H1 (cell line): ENCODE measurements at regions of chr3 and their contacts with region 1.

Region 1: DNA sequence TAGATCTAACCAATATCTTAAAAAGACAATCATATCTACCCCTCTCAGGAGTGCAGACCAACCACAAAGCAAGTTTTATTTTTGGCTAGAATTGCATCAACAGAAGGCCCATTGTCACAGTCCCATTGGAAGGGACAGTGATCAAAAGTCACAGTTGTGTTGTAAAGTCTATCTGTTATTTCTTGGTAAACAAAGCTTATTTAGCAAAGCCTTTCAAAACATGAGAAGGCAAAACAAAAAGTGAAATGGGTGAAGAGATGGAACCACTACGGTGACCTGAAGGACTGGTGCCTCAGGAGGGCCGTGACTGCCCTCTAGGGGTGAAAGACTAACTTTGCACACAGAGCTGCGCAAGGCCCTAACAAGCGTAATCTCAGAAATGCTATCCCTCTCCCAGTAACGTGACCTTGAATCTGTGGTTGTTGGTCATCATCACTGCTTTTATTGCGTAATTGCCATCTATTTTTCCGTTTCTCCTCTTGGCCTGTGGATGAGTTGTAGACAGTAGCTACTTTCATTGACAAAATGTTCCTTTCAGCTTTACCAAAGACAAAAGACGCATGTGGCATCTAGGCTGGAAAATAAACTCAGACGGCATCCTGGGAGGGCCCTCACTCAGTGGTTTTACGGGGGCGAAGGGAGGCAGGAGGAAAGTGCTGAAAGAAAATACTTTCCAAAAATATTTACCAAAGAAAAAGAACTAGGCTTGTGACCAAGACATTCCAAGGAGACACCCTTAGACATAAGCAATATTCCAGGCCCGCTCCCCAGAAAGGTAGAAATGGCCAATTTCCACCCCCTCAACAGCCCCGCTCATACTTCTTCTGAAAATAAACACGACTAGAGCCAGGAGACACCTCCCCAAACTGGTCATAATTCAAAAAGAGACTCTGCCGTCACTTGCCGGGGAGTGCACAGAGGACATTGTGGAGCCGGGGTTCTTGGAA is 79.4 kb downstream of the FRMD4B start:
- DNase-seq: peak in 1 of 2 experiments; percentile 63
- H3K4me3 ChIP-seq: no peak overlapping the region
- H3K27ac ChIP-seq: no peak overlapping the region
- H3K4me1 ChIP-seq: no peaks in the 10 kb centered on the region
- H3K27me3 ChIP-seq: no peaks in the 10 kb centered on the region
- CTCF ChIP-seq: peak; percentile 86 to 98 (median 91)
- EP300 ChIP-seq: no peak
- POLR2A ChIP-seq: no peak
- RAD21 ChIP-seq: peak; percentile 98 to 99

Region 2: DNA sequence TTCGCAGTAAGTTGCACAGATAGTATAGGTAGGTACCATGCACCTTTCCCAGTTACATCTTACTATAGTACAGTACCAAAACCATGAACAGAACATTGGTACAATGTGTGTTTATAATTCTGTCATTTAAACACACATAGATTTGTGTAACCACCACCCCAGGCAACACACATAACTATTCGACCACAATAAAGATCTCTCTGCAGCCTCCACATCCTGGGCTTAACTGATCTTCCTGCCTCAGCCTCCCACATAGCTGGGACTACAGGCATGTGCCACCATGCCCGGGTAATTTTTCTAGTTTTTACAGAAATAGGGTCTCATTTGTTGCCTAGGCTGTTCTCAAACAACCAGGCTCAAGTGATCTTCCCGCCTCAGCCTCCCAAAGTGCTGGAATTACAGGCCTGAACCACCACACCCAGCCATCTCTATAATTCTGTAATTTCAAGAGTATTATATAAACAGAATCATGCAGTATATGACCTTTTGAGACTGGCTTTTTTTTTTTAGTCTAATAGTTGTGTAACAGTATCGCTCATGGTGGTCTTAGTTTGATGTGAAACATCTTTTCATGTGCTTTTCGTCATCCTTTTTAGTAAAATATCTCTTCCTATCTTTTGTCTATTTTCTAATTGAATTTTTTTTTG is 241.1 kb before region 1 on chr3:
- CTCF ChIA-PET with region 1: no interaction called
- POLR2A ChIA-PET with region 1: no interaction called
- DNase-seq: no peak
- H3K4me3 ChIP-seq: no peak overlapping the region
- H3K27ac ChIP-seq: no peak overlapping the region
- H3K4me1 ChIP-seq: no peaks in the 10 kb centered on the region
- H3K27me3 ChIP-seq: no peaks in the 10 kb centered on the region
- CTCF ChIP-seq: no peak
- EP300 ChIP-seq: no peak
- POLR2A ChIP-seq: no peak
- RAD21 ChIP-seq: no peak

Region 3: DNA sequence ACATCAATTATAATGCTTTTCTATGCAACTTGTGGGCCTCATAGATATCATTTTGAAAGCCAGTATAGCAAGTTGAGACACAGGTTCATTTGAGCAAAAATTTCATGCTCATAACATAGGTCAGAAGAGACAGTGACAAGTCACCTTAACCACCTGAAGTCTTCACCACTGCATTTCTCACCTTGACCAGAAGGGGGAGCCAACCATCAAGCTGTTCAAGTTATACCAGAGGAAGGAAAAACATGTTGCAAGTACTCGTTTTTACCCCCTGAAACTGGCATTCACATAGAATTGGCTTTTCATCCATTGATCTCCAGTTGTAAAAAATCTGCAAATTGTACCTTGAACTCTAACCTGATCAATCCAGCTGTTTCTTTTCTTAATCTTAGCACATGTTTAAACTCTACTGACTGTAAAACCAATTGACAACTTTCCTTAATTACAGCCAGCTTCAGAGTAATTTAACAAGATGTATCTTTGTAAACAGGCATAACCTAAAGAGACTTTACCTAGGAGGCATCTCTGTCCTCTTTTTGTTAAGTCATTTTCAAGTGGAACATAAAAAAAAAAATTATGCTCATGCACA is 185.5 kb before region 1 on chr3:
- CTCF ChIA-PET with region 1: interaction called, 59 read pairs
- POLR2A ChIA-PET with region 1: no interaction called
- DNase-seq: peak; percentile 70 to 91
- H3K4me3 ChIP-seq: no peak overlapping the region
- H3K27ac ChIP-seq: no peak overlapping the region
- H3K4me1 ChIP-seq: no peaks in the 10 kb centered on the region
- H3K27me3 ChIP-seq: no peaks in the 10 kb centered on the region
- CTCF ChIP-seq: peak in 2 of 3 experiments; percentile 81 to 95; a peak in 3 of 4 replicates
- EP300 ChIP-seq: no peak
- POLR2A ChIP-seq: no peak
- RAD21 ChIP-seq: peak; percentile 91 to 92

Region 4: GRCh38 chr3:69174871-69175737 is 131.4 kb before region 1 on chr3:
- CTCF ChIA-PET with region 1: interaction called, 10 read pairs
- POLR2A ChIA-PET with region 1: no interaction called
- DNase-seq: no peak
- H3K4me3 ChIP-seq: no peak overlapping the region
- H3K27ac ChIP-seq: no peak overlapping the region
- H3K4me1 ChIP-seq: peaks cover 0 to 5% (median 0%) of the 10 kb centered on the region in 4 experiments; a peak in 2 of 7 replicates
- H3K27me3 ChIP-seq: no peaks in the 10 kb centered on the region
- CTCF ChIP-seq: no peak
- EP300 ChIP-seq: no peak
- POLR2A ChIP-seq: no peak
- RAD21 ChIP-seq: no peak

Region 5: GRCh38 chr3:69288161-69288895 is 18.2 kb before region 1 on chr3:
- CTCF ChIA-PET with region 1: interaction called, 44 read pairs
- POLR2A ChIA-PET with region 1: no interaction called
- DNase-seq: peak; percentile 49 to 68
- H3K4me3 ChIP-seq: peak overlapping the region in 3 of 4 experiments; percentile 19 to 50 (median 23); a peak in 4 of 8 replicates
- H3K27ac ChIP-seq: no peak overlapping the region
- H3K4me1 ChIP-seq: peaks cover 8 to 34% (median 15%) of the 10 kb centered on the region in 4 experiments; a peak in 5 of 7 replicates
- H3K27me3 ChIP-seq: peaks cover 0 to 4% (median 0%) of the 10 kb centered on the region in 4 experiments; a peak in 3 of 7 replicates
- CTCF ChIP-seq: no peak
- EP300 ChIP-seq: peak in 1 of 2 experiments; percentile 80; a peak in 1 of 3 replicates
- POLR2A ChIP-seq: 0 out of 3 replicates have a peak, but pooled peaks of 1 of the 2 experiments have one; percentile 34
- RAD21 ChIP-seq: peak; percentile 2 to 6; a peak in 1 of 4 replicates

Region 6: DNA sequence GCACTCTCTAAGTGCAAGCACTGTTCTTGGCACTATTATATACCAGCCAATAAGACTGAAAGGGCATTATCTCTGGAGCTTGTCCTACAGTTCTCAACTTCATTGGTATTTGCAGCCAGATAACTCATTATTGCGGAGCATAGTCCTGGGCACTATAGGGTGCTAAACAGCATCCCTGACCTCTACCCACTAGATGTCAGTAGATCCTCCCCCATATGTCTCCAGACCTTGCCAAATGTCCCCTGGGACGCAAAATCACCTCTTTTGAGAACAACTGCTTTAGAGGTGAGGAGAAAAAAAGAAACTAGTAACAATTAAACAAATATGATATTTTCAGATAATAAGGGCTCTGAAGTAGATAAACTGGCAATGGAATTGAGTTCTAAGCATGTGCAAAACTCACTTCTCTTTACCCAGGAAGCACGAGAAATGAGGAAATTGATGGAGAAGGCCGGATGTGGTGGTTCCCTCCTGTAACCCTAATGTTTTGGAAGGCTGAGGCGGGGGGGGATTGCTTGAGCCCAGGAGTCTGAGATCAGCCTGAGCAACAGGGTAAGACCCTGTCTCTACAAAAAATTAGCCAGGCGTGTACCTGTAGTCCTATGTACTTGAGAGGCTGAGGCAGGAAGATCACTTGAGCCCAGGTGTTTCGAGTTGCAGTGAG is 18.0 kb after region 1 on chr3:
- CTCF ChIA-PET with region 1: interaction called, 47 read pairs
- POLR2A ChIA-PET with region 1: no interaction called
- DNase-seq: peak in 1 of 2 experiments; percentile 5
- H3K4me3 ChIP-seq: no peak overlapping the region
- H3K27ac ChIP-seq: no peak overlapping the region
- H3K4me1 ChIP-seq: peaks cover 0 to 4% (median 0%) of the 10 kb centered on the region in 4 experiments; a peak in 1 of 7 replicates
- H3K27me3 ChIP-seq: no peaks in the 10 kb centered on the region; a peak in 1 of 7 replicates
- CTCF ChIP-seq: peak; percentile 49 to 83 (median 74)
- EP300 ChIP-seq: no peak
- POLR2A ChIP-seq: no peak
- RAD21 ChIP-seq: peak; percentile 88 to 94

Region 7: GRCh38 chr3:69425261-69425660 is 118.7 kb after region 1 on chr3:
- CTCF ChIA-PET with region 1: interaction called, 60 read pairs
- POLR2A ChIA-PET with region 1: no interaction called
- DNase-seq: no peak
- H3K4me3 ChIP-seq: no peak overlapping the region
- H3K27ac ChIP-seq: no peak overlapping the region
- H3K4me1 ChIP-seq: no peaks in the 10 kb centered on the region; a peak in 1 of 7 replicates
- H3K27me3 ChIP-seq: no peaks in the 10 kb centered on the region
- CTCF ChIP-seq: peak in 2 of 3 experiments; percentile 79 to 85; a peak in 3 of 4 replicates
- EP300 ChIP-seq: no peak
- POLR2A ChIP-seq: no peak
- RAD21 ChIP-seq: peak; percentile 83 to 89

Region 8: GRCh38 chr3:69524816-69525215 is 218.3 kb after region 1 on chr3:
- CTCF ChIA-PET with region 1: no interaction called
- POLR2A ChIA-PET with region 1: no interaction called
- DNase-seq: no peak
- H3K4me3 ChIP-seq: no peak overlapping the region
- H3K27ac ChIP-seq: no peak overlapping the region
- H3K4me1 ChIP-seq: no peaks in the 10 kb centered on the region
- H3K27me3 ChIP-seq: no peaks in the 10 kb centered on the region
- CTCF ChIP-seq: no peak
- EP300 ChIP-seq: no peak
- POLR2A ChIP-seq: no peak
- RAD21 ChIP-seq: no peak

Region 9: DNA sequence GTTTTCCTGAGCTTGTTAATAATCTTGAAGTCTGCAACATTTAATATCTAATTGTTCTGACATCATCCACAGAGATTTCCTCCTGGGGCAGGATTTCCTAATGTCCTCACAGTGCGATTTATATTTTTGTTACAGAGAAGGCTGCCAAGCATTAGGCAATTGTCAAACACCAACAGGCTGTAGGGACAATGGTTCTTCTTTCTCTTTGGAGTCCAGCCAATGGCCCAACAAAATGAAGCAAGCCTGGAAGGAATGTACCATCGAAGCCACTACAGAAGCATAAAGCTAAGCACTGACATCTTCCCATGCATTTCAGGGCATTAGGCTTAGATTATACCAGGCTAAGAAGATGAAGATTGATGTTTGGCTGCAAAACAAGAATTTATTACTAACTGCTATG is 252.4 kb after region 1 on chr3:
- CTCF ChIA-PET with region 1: no interaction called
- POLR2A ChIA-PET with region 1: no interaction called
- DNase-seq: no peak
- H3K4me3 ChIP-seq: no peak overlapping the region
- H3K27ac ChIP-seq: no peak overlapping the region
- H3K4me1 ChIP-seq: no peaks in the 10 kb centered on the region
- H3K27me3 ChIP-seq: no peaks in the 10 kb centered on the region
- CTCF ChIP-seq: no peak
- EP300 ChIP-seq: no peak
- POLR2A ChIP-seq: no peak
- RAD21 ChIP-seq: no peak